ENCODE measurements at regions of chrX and their contacts with region 1.

Region 1: GRCh38 chrX:46836701-46837557 is at the start of gene RP2:
- DNase-seq: peak; percentile 96
- H3K4me3 ChIP-seq: peak within 1 kb of the TSS; percentile 70 to 96 (median 71)
- H3K27ac ChIP-seq: peak within 1 kb of the TSS; percentile 67
- H3K4me1 ChIP-seq: peaks cover 5% of the 10 kb centered on the region
- H3K27me3 ChIP-seq: peaks cover 0 to 3% of the 10 kb centered on the region in 2 experiments
- CTCF ChIP-seq: no peak
- POLR2A ChIP-seq: no peak
- total RNA-seq, gene RP2: 18.7 and 20.5 TPM in 2 replicates

Region 2: GRCh38 chrX:46683038-46683437 is 153.9 kb before region 1 on chrX:
- CTCF ChIA-PET with region 1: no interaction called
- POLR2A ChIA-PET with region 1: no interaction called
- dilution Hi-C with region 1: no loop called
- intact Hi-C with region 1: no loop called
- DNase-seq: no peak
- H3K4me3 ChIP-seq: no peak overlapping the region
- H3K27ac ChIP-seq: no peak overlapping the region
- H3K4me1 ChIP-seq: peaks cover 3% of the 10 kb centered on the region
- H3K27me3 ChIP-seq: no peaks in the 10 kb centered on the region
- CTCF ChIP-seq: no peak
- POLR2A ChIP-seq: no peak

Region 3: DNA sequence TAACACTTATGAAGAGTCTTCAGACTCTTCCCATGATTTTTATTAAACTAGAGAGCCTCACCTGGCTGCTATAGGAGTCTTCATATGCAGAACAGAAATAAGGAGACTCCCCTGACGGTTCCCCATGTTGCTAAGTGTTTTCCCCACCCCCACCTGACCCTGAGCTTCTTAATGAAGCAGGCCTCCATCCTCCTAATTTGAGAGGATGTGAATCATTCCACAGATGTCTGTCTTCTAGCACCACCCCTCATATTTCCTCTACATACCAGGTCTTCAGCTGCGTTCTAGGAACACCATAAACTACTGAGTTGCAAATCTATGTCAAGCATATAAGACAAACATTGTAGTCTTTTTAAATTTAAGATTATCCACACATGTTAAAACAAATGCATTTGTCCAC is 36.8 kb after region 1 on chrX:
- CTCF ChIA-PET with region 1: no interaction called
- POLR2A ChIA-PET with region 1: no interaction called
- dilution Hi-C with region 1: no loop called
- intact Hi-C with region 1: loop called (anchors 5 kb)
- DNase-seq: peak; percentile 39
- H3K4me3 ChIP-seq: no peak overlapping the region
- H3K27ac ChIP-seq: peak overlapping the region; percentile 7
- H3K4me1 ChIP-seq: peaks cover 10% of the 10 kb centered on the region
- H3K27me3 ChIP-seq: no peaks in the 10 kb centered on the region
- CTCF ChIP-seq: no peak
- POLR2A ChIP-seq: no peak

Region 4: DNA sequence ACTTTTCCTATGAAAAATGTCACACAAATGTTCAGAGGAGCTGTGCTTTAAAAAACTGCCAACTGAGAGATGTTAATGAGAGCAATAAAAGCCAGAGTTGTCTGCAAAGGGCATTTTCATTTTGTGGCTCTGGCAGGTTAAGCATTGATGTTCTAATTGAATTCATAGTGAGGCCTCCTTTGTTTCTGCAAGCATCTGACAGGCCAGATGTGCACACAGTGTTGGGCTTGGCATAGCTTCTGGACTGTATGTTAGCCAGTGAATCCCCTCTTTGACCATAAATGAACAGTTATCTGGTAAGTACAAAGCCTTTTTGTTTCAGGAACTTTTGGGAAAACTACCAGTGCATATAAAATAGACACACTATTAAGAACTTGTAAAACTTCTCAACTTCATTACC is 157.2 kb after region 1 on chrX:
- CTCF ChIA-PET with region 1: no interaction called
- POLR2A ChIA-PET with region 1: no interaction called
- dilution Hi-C with region 1: no loop called
- intact Hi-C with region 1: no loop called
- DNase-seq: peak; percentile 4
- H3K4me3 ChIP-seq: no peak overlapping the region
- H3K27ac ChIP-seq: no peak overlapping the region
- H3K4me1 ChIP-seq: peaks cover 6% of the 10 kb centered on the region
- H3K27me3 ChIP-seq: no peaks in the 10 kb centered on the region
- CTCF ChIP-seq: no peak
- POLR2A ChIP-seq: no peak

Measured in endothelial cell of umbilical vein (primary cell).